HEK293 (cell line): ENCODE measurements at regions of chr2 and their contacts with region 1.

Region 1: GRCh38 chr2:208101716-208102631 is 22.4 kb downstream of the CRYGD start:
- H3K4me3 ChIP-seq: no peak overlapping the region
- H3K27ac ChIP-seq: no peak overlapping the region
- H3K4me1 ChIP-seq: no peaks in the 10 kb centered on the region
- CTCF ChIP-seq: no peak

Region 2: GRCh38 chr2:206971805-206972204 is 1130.2 kb before region 1 on chr2:
- CTCF ChIA-PET with region 1: no interaction called
- POLR2A ChIA-PET with region 1: no interaction called
- H3K4me3 ChIP-seq: no peak overlapping the region
- H3K27ac ChIP-seq: no peak overlapping the region
- H3K4me1 ChIP-seq: no peaks in the 10 kb centered on the region
- CTCF ChIP-seq: no peak

Region 3: GRCh38 chr2:207974216-207974605 is 127.8 kb before region 1 on chr2:
- CTCF ChIA-PET with region 1: no interaction called
- POLR2A ChIA-PET with region 1: no interaction called
- H3K4me3 ChIP-seq: no peak overlapping the region
- H3K27ac ChIP-seq: no peak overlapping the region
- H3K4me1 ChIP-seq: peaks cover 14% of the 10 kb centered on the region
- CTCF ChIP-seq: no peak

Region 4: DNA sequence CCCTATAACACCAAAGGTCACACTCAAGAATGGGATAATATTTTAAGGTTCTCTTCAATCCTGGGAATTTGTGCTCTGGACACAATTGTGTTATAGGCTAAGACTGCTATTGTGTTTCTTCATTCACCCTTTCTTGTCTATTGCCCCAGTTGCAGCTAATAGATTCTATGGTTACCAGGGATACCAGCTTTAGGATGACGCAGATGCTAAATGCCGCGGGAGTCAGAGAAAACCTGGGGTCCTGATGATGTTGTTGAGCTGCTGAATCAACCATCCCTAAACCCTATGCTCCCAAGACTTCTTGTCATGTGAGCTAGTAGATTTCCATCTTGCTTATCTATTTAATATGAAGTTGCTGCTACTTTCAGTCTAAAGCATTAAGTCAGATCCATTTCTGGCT is 16.9 kb after region 1 on chr2:
- CTCF ChIA-PET with region 1: interaction called, 11 read pairs
- POLR2A ChIA-PET with region 1: no interaction called
- H3K4me3 ChIP-seq: no peak overlapping the region
- H3K27ac ChIP-seq: no peak overlapping the region
- H3K4me1 ChIP-seq: no peaks in the 10 kb centered on the region
- CTCF ChIP-seq: no peak

Region 5: DNA sequence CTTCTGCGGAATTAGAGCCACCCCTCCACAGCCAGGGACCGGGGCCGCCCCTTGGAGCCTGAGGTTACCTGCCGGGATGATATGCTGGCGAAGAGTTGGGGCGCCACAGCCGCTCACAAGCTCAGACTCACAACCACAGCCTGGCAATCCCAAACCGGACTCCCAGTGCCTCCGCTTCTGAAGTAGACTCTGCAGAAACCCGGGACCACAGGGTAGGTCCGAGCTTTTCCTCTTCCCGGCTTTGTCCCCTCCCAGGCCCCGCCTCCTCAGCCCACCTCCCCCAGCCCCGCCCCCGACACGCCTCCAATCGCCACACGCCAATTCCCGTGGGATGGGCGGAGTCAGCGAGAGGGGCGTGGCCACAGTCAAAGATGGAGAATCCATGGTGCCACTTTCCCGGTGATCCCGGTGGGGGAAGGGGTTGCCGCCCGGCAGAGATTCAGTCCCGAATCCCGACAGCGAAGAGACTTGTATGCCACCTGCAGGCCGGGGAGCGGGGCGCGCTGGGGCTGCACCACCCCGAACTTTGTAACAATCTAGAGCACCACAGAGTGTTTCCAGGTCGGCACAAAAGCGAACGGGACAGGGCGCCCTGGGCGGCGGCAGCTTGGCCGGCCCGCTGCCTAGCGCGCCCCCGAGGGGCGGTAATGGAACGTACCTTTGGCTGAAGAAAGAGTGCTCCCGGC is 153.0 kb after region 1 on chr2 and contains the start of gene IDH1:
- CTCF ChIA-PET with region 1: interaction called, 47 read pairs
- POLR2A ChIA-PET with region 1: interaction called, 14 read pairs
- H3K4me3 ChIP-seq: peak within 1 kb of the TSS; percentile 82
- H3K27ac ChIP-seq: peak within 1 kb of the TSS; percentile 83
- H3K4me1 ChIP-seq: 0 out of 2 replicates have a peak, but pooled peaks cover 2% of the 10 kb centered on the region
- CTCF ChIP-seq: peak; percentile 91